Endothelial cell of umbilical vein (primary cell): ENCODE measurements at regions of chr2 and their contacts with region 1.

Region 1: GRCh38 chr2:169716238-169716886 is 17.3 kb upstream of the KLHL23 start:
- DNase-seq: peak; percentile 26
- H3K4me3 ChIP-seq: no peak overlapping the region
- H3K27ac ChIP-seq: no peak overlapping the region
- H3K4me1 ChIP-seq: peaks cover 22% of the 10 kb centered on the region
- H3K27me3 ChIP-seq: no peaks in the 10 kb centered on the region
- CTCF ChIP-seq: no peak
- POLR2A ChIP-seq: no peak

Region 2: DNA sequence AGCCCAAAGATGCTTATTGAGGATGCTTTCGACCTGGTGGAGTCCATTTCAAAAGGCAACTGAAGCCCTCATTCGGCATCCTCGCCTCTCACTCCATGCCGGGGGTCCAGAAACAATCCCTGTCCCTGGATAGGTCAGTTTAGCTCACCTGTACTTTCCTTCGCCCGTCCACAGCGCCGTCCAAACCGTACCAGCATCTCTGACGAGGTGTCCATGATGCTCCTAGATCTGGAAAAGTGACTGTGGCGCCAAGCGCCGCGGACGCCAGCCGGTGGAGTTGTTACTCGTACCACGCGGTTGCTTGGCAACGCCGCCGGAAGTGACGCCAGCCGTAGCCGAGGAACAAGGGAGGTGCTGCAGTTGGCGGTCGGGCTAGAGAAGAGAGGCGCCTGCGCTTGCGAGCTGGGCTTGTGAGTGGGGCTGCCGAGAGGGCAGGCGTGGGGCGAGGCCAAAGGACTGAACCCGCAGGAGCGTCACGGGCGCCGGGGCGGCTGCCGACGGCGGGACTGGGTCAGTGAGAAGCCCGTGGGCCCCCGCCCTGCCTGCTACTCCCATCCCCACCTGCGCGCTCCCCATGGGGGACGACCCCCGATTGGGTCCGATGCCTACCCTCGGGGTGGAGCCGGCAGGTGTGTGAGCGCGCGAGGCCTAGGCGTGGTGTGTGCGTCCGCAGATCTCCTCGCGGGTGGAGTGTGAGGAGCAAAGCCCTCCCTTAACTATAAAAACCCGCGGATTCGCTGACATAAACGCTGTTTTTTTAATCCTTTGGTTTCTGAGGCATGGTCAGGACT is 22.1 kb before region 1 on chr2 and contains the starts of genes CFAP210 and PHOSPHO2:
- CTCF ChIA-PET with region 1: no interaction called
- POLR2A ChIA-PET with region 1: no interaction called
- dilution Hi-C with region 1: no loop called
- intact Hi-C with region 1: loop called (anchors 2 kb)
- DNase-seq: peak; percentile 96
- H3K4me3 ChIP-seq: peak within 1 kb of the TSS; percentile 21 to 87 (median 85)
- H3K27ac ChIP-seq: peak within 1 kb of the TSS; percentile 64
- H3K4me1 ChIP-seq: peaks cover 8% of the 10 kb centered on the region
- H3K27me3 ChIP-seq: peaks cover 11 to 25% of the 10 kb centered on the region in 2 experiments
- CTCF ChIP-seq: no peak
- POLR2A ChIP-seq: peak; percentile 80
- total RNA-seq, gene CFAP210: not detected in 2 replicates
- total RNA-seq, gene PHOSPHO2: 2.7 TPM in 2 replicates